Activated naive CD8-positive, alpha-beta T cell treated with anti-CD3 and anti-CD28 coated beads, Interleukin-2, amount 10 ng/mL, durations not matched to agents 7 days and 5 days (primary cell): ENCODE measurements at regions of chr9 and their contacts with region 1.

Region 1: GRCh38 chr9:111661150-111661801 is at the start of gene GNG10:
- DNase-seq: peak; percentile 86
- ATAC-seq: peak; percentile 92
- H3K4me3 Mint-ChIP-seq: peak within 1 kb of the TSS; percentile 96
- H3K27ac Mint-ChIP-seq: peak within 1 kb of the TSS; percentile 93
- H3K4me1 Mint-ChIP-seq: peaks cover 23% of the 10 kb centered on the region
- H3K27me3 Mint-ChIP-seq: no peaks in the 10 kb centered on the region
- total RNA-seq, gene GNG10: 17.8 to 18.5 TPM

Region 2: GRCh38 chr9:111631071-111631971 is 30.0 kb before region 1 on chr9 and contains the start of gene DNAJC25:
- POLR2A ChIA-PET with region 1: interaction called, 20 read pairs
- DNase-seq: peak; percentile 96
- ATAC-seq: peak; percentile 98
- H3K4me3 Mint-ChIP-seq: peak within 1 kb of the TSS; percentile 98
- H3K27ac Mint-ChIP-seq: peak within 1 kb of the TSS; percentile 84
- H3K4me1 Mint-ChIP-seq: peaks cover 36% of the 10 kb centered on the region
- H3K27me3 Mint-ChIP-seq: no peaks in the 10 kb centered on the region
- total RNA-seq, gene DNAJC25: 3.6 to 4.3 TPM

Region 3: DNA sequence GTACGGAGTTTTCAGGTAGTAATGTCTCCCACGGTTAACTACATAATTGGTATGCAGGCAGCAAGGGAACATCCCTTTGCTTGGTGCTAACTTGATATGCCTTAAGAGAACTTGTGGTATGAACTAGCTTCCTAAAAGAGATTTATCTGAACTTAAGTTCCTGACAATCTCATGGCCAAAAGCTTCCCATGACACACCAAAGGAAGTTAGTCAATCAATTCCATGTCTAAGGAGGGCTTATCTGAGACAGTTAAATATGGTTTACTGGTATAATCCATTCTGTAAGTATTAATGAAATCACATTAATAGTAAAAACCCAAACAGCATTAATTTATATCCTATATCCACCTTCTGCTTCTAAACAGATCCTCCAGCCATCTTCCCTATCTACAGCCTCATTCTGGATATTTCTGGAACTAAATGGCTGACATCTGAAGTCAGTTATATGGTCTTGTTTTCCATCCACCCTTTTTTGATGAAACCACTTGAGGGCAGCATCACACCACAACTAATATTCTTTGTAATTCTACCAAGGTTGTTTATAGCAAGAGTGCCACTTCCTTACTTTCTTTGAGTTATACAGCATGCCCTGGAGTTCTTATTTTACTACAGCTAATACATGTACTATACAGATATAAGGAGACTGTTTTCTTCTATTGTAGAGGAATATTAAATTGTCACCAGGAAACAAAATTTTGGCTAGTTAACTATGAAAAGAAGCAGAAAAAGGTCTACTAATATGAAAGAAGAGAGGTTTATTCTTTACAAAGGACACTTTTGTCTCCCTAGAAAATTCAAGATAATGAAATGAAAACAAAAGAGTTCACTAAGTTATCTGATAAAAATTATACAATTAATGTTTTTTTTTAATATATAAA is 98.7 kb after region 1 on chr9:
- POLR2A ChIA-PET with region 1: no interaction called
- DNase-seq: no peak
- ATAC-seq: no peak
- H3K4me3 Mint-ChIP-seq: no peak overlapping the region
- H3K27ac Mint-ChIP-seq: no peak overlapping the region
- H3K4me1 Mint-ChIP-seq: peaks cover 4% of the 10 kb centered on the region
- H3K27me3 Mint-ChIP-seq: peaks cover 2% of the 10 kb centered on the region